A549 (cell line): ENCODE measurements at regions of chr17 and their contacts with region 1.

Region 1: DNA sequence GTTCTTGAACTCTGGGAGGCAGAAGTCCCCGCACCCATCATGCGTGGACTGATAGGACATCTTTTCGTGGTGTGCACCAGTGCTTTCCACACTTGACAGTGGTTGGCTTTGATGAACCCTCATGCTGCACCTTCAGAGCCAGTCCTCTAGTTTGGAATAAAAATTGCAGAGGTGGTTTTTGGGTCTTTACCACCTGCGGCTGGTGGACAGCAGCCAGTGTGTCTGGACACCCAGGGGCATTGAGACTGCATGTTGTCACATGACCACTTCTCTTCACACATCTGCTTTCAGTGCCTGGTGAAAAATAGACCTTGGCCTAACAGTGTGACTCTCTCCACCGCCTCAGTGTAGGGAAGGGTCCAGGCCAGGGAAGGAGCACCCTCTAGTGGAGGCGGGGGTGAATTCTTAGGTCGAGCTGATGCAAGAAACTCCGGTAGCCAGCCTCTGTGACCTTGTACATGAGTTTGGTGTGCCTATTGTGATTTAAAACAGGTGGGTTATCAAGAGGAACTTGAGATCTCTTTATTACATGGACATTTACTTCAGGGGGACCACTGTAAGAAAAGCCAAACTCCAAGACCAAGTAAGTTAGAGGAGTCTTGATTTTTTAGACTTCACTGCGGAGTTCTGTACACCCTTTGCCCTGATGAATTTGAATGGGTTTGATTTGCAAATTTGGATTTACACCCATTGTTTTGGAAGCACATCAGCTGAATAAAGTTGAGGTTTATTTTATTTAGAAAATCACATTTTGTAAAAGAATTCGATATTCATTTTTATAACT is 17.9 kb downstream of the GOSR2 start:
- DNase-seq: peak; percentile 84 to 97
- ATAC-seq: peak; percentile 74 to 85
- H3K4me3 ChIP-seq: no peak overlapping the region
- H3K27ac ChIP-seq: peak overlapping the region in 1 of 2 experiments; percentile 46; a peak in 2 of 6 replicates
- H3K4me1 ChIP-seq: no peaks in the 10 kb centered on the region
- CTCF ChIP-seq: peak; percentile 95
- EP300 ChIP-seq: no peak
- POLR2A ChIP-seq: no peak
- RAD21 ChIP-seq: peak; percentile 85 to 91

Region 2: GRCh38 chr17:46758623-46759022 is 182.2 kb before region 1 on chr17:
- CTCF ChIA-PET with region 1: no interaction called
- POLR2A ChIA-PET with region 1: no interaction called
- DNase-seq: peak in 1 of 2 experiments; percentile 51
- ATAC-seq: peak; percentile 62 to 84; a peak in 4 of 6 replicates
- H3K4me3 ChIP-seq: no peak overlapping the region
- H3K27ac ChIP-seq: peak overlapping the region in 1 of 2 experiments; percentile 55; a peak in 3 of 6 replicates
- H3K4me1 ChIP-seq: peaks cover 26% of the 10 kb centered on the region
- CTCF ChIP-seq: no peak
- EP300 ChIP-seq: no peak
- POLR2A ChIP-seq: no peak
- RAD21 ChIP-seq: 0 out of 5 replicates have a peak, but pooled peaks of 1 of the 2 experiments have one; percentile 8

Region 3: DNA sequence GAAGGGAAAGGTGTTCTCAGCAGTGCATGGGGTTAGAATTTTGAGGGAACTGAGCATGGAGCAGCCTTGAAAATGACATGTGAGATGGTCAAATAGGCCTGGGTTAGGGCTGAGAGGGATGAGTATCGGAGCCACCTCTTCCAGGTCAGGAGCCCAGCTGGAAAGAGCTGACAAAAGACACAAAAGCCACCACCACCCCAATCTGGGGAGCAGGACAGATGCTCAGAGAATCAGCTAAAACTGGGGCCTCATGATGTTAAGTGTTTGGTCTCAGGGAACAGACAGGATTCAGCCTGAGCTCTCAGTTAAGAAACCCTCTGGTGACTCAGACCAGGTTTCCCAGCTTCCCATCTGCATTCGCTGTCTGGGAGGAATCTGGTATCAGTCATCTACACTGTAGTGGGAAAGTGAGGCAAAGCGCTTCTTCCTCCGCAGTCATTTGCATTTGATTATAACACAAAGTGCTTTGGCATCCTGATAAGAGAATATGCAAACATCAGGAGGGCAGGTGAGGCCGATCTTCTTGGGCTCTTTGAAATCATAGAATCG is 86.8 kb before region 1 on chr17:
- CTCF ChIA-PET with region 1: interaction called, 10 read pairs
- POLR2A ChIA-PET with region 1: no interaction called
- DNase-seq: no peak
- ATAC-seq: no peak
- H3K4me3 ChIP-seq: no peak overlapping the region
- H3K27ac ChIP-seq: no peak overlapping the region
- H3K4me1 ChIP-seq: peaks cover 5% of the 10 kb centered on the region; the same call in 1 of the 3 replicates
- CTCF ChIP-seq: no peak
- EP300 ChIP-seq: no peak
- POLR2A ChIP-seq: no peak
- RAD21 ChIP-seq: no peak

Region 4: DNA sequence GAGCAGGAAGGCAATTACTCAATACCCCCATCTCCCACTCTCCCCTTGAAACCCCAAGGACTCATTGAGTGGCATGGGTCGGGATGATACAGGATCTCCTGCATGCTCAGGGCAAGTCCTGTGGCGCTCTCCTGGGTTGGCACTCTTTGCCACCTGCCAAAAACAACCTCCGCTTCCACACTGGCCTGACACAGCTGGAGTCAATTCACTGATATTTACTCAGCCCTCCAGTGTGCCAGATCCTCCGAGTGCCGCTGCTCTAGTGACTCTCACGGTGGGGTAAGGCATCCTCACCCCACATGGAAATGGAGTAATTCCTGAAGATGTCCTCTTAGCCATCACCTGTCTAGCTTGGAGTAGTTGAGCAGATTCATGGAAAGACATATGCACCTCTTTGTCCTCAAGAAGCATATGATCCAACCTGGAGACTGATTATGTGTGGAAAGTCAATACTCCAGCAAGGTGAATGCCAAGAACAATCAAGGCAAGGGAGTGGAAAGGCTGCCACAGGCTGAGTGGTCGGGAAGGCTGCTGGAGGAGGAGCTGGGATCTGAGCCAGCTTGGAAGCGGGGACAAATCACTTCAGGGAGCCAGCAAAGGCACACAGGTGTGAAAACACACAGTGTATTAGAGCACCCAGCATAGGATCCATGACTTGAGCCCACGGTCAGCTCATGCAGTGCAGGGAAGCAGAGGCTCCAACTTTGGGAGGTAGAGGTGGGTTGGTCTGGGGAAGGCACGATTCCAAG is 30.5 kb before region 1 on chr17:
- CTCF ChIA-PET with region 1: interaction called, 68 read pairs
- POLR2A ChIA-PET with region 1: no interaction called
- DNase-seq: no peak
- ATAC-seq: no peak
- H3K4me3 ChIP-seq: no peak overlapping the region
- H3K27ac ChIP-seq: no peak overlapping the region
- H3K4me1 ChIP-seq: no peaks in the 10 kb centered on the region
- CTCF ChIP-seq: no peak
- EP300 ChIP-seq: no peak
- POLR2A ChIP-seq: no peak
- RAD21 ChIP-seq: no peak

Region 5: GRCh38 chr17:46929413-46929812 is 11.4 kb before region 1 on chr17:
- CTCF ChIA-PET with region 1: interaction called, 54 read pairs
- POLR2A ChIA-PET with region 1: interaction called, 4 read pairs
- DNase-seq: no peak
- ATAC-seq: no peak
- H3K4me3 ChIP-seq: no peak overlapping the region
- H3K27ac ChIP-seq: no peak overlapping the region
- H3K4me1 ChIP-seq: peaks cover 14% of the 10 kb centered on the region
- CTCF ChIP-seq: no peak
- EP300 ChIP-seq: no peak
- POLR2A ChIP-seq: no peak
- RAD21 ChIP-seq: no peak

Region 6: GRCh38 chr17:46984892-46985291 is 44.1 kb after region 1 on chr17:
- CTCF ChIA-PET with region 1: interaction called, 460 read pairs
- POLR2A ChIA-PET with region 1: no interaction called
- DNase-seq: no peak
- ATAC-seq: no peak
- H3K4me3 ChIP-seq: no peak overlapping the region
- H3K27ac ChIP-seq: no peak overlapping the region
- H3K4me1 ChIP-seq: no peaks in the 10 kb centered on the region
- CTCF ChIP-seq: no peak
- EP300 ChIP-seq: no peak
- POLR2A ChIP-seq: no peak
- RAD21 ChIP-seq: no peak

Region 7: DNA sequence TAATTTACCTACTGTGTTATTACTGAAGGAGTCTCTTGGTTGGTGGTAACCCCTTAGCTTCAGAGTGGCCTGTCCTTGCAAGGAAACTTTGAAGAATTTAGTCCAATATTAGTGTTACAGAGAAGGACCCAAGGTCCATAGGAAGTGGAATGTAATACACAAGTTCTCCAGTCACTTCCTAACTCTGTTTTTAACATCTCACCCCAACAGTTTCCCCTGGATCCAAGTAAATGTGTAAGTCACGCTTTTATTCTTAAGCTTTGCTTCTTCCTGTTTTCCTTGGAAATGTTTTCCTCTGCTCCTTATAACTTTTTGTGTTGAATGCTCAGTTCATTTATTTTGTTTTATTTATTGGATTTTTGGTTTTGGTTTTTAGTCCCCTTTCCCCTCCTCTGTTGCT is 64.1 kb after region 1 on chr17:
- CTCF ChIA-PET with region 1: interaction called, 90 read pairs
- POLR2A ChIA-PET with region 1: interaction called, 3 read pairs
- DNase-seq: no peak
- ATAC-seq: no peak
- H3K4me3 ChIP-seq: no peak overlapping the region
- H3K27ac ChIP-seq: no peak overlapping the region
- H3K4me1 ChIP-seq: no peaks in the 10 kb centered on the region
- CTCF ChIP-seq: no peak
- EP300 ChIP-seq: no peak
- POLR2A ChIP-seq: no peak
- RAD21 ChIP-seq: no peak

Region 8: DNA sequence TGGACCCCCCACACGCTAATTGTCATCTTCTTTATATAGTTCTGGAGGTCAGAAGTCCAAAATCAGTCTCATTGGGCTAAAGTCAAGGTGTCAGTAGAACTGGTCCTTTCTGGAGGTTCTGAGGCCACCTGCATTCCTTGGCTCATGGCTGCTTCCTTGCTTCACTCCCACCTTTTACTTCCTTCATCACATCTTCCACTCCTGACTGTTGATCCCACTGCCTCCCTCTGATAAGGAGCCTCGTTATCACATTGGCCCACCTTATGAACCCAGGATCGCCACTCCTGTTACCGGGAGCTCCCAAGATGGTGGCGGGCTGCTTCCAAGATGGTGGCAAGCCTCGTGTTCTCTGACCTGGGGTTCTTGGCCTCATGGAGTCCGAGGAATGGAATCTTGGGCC is 165.3 kb after region 1 on chr17:
- CTCF ChIA-PET with region 1: no interaction called
- POLR2A ChIA-PET with region 1: no interaction called
- DNase-seq: no peak
- ATAC-seq: 0 out of 6 replicates have a peak, but pooled peaks of 1 of the 2 experiments have one; percentile 11
- H3K4me3 ChIP-seq: no peak overlapping the region
- H3K27ac ChIP-seq: no peak overlapping the region
- H3K4me1 ChIP-seq: 0 out of 3 replicates have a peak, but pooled peaks cover 4% of the 10 kb centered on the region
- CTCF ChIP-seq: no peak
- EP300 ChIP-seq: no peak
- POLR2A ChIP-seq: no peak
- RAD21 ChIP-seq: no peak

Region 9: GRCh38 chr17:47315451-47316266 is 374.8 kb after region 1 on chr17:
- CTCF ChIA-PET with region 1: interaction called, 19 read pairs
- POLR2A ChIA-PET with region 1: no interaction called
- DNase-seq: peak; percentile 78 to 84
- ATAC-seq: peak; percentile 86 to 94
- H3K4me3 ChIP-seq: no peak overlapping the region
- H3K27ac ChIP-seq: peak overlapping the region in 1 of 2 experiments; percentile 39; a peak in 2 of 6 replicates
- H3K4me1 ChIP-seq: peaks cover 16% of the 10 kb centered on the region
- CTCF ChIP-seq: peak; percentile 97
- EP300 ChIP-seq: no peak
- POLR2A ChIP-seq: no peak
- RAD21 ChIP-seq: peak; percentile 97 to 99